Naive thymus-derived CD8-positive, alpha-beta T cell (primary cell): ENCODE measurements at regions of chr19 and their contacts with region 1.

Region 1: GRCh38 chr19:12194827-12195731 is 32.2 kb downstream of the ZNF136 start:
- DNase-seq: peak; percentile 48 to 92 (median 77)
- ATAC-seq: peak; percentile 93 to 97
- H3K4me3 Mint-ChIP-seq: peak overlapping the region; percentile 73 to 94 (median 90)
- H3K27ac Mint-ChIP-seq: peak overlapping the region; percentile 33 to 98 (median 85)
- H3K4me1 Mint-ChIP-seq: peaks cover 7 to 22% (median 14%) of the 10 kb centered on the region in 4 donors
- H3K27me3 Mint-ChIP-seq: no peaks in the 10 kb centered on the region

Region 2: GRCh38 chr19:12126707-12127106 is 68.4 kb before region 1 on chr19:
- POLR2A ChIA-PET with region 1: no interaction called
- DNase-seq: peak in 1 of 10 donors; percentile 10
- ATAC-seq: no peak
- H3K4me3 Mint-ChIP-seq: no peak overlapping the region
- H3K27ac Mint-ChIP-seq: no peak overlapping the region
- H3K4me1 Mint-ChIP-seq: peaks cover 0 to 3% (median 0%) of the 10 kb centered on the region in 4 donors
- H3K27me3 Mint-ChIP-seq: no peaks in the 10 kb centered on the region

Region 3: DNA sequence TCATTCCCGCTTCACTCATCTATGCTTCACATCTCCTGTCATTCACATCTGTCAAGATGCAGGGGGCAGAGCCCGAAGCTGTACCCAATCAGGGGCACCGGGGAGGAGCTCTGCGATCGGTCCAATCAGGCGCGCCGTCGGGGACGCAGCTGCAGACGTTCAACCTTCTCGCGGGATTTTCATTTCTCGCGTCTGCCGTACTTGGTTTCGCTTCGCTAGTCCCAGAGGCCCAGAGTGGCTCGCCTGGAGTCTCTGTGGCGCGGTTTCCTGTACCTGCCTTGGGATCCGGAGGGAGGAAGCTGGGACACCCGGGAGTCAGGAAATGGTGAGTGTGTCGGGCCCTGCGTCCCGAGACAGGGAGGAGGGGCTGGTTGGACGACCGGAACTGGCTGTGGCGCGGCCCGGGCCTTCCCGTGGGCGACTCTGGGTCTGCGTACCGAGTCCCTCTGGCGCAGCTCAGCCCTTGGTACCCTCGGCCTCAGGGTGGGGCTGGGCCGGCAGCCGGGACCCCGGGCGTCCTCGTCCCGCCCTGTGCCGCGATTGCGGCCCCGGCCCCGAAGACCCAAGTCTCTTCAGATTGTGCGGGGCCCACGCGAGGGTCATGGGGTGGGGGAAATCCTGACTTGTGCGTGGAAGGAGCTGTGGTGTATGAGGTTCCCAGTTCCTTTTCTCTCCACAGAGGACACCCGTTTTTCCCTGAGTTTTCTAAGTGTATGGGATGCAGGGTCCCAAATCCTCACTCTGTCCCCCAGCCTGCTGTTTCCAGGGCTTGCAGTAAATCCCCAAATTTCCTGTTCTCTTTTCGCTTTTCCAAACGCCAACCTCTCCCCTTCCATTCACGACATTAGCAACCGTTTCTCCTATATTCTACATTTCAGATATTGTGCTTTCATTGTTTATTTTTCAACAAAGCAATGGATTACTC is 31.9 kb before region 1 on chr19 and contains the start of gene ZNF136:
- POLR2A ChIA-PET with region 1: interaction called, 18 read pairs
- DNase-seq: peak; percentile 83 to 97 (median 91)
- ATAC-seq: peak; percentile 99
- H3K4me3 Mint-ChIP-seq: peak within 1 kb of the TSS; percentile 93 to 100 (median 97)
- H3K27ac Mint-ChIP-seq: peak within 1 kb of the TSS; percentile 96 to 99 (median 98)
- H3K4me1 Mint-ChIP-seq: peaks cover 18 to 52% (median 51%) of the 10 kb centered on the region in 4 donors
- H3K27me3 Mint-ChIP-seq: no peaks in the 10 kb centered on the region
- polyA plus RNA-seq, gene ZNF136: 17.8 to 22.6 (median 19.9) TPM